Posterior cingulate gyrus (tissue), 11 donors: ENCODE measurements at regions of chr18 and their contacts with region 1.

Region 1: DNA sequence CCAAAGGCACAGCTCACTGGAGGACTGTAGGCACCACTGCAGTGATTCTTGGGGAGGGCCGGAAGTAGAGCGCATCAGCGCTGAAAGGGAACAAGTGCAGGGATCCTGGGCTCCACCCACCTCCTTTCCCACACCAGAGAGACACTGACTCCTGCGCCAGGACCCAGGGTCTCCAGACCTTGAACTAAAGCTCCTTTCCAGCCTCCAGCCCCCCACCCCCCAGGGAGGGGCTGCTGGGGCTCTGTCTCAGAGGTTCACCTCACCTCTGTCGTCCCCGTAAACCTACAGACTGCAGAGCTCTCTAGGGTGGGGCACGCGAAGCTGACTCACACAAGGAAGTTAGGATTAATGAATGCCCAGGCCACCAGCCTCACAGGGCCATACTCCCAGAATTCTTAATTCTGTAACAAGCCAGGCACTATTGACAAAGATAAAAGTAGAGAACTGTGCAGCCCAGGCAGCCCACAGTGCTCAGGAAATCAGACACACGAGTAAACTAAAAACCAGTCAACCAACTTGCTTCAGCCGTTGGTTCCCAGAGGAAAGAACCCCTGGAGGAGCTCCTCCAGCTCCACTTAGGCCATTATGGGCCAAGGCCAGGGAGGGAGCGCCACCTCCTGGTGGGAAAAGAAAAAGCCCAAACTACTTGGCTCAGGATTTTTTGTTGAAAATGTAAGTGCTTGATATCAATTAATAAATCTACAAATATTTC is 45.1 kb upstream of the ACAA2 start:
- DNase-seq: peak in 8 of 10 donors; percentile 56 to 94 (median 74)

Region 2: DNA sequence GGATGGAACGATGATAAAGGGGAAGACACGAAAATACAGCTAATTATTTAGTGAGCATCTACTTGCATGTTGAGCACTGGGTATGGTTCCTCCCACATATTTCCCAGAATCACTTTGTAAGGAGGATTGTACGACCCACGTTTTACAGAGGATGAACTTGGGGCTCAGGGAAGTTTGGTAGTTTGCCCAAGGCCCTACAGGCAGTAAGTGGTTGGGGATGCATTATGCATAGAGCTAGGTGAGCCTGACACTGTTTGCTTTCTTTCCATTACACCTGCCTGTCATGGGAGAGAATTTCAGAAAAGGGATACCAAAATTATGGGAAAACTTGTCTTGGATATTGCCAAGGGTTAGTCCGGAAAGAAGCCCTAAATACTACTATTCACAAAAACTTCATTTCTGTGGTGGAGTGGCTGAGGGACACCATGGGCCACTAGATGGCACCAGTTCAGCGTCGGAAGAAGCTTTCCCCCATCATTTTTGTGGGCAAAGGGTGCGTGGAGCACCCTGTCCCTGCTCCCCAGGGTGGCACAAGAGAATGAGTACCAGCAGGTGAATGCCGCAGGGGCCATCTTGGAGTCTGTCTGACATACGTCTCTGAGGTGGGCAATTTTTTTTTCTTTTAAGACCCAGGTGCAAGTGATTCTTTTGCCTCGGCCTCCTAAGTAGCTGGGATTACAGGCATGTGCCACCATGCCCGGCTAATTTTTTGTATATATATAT is 347.9 kb before region 1 on chr18:
- intact Hi-C with region 1: loop called (anchors 2 kb)
- DNase-seq: peak in 7 of 10 donors; percentile 32 to 89 (median 49)

Region 3: GRCh38 chr18:49561289-49562193 is 296.9 kb before region 1 on chr18 and contains the start of gene LIPG:
- intact Hi-C with region 1: loop called (anchors 1 kb)
- DNase-seq: peak in 6 of 10 donors; percentile 10 to 83 (median 53)

Region 4: DNA sequence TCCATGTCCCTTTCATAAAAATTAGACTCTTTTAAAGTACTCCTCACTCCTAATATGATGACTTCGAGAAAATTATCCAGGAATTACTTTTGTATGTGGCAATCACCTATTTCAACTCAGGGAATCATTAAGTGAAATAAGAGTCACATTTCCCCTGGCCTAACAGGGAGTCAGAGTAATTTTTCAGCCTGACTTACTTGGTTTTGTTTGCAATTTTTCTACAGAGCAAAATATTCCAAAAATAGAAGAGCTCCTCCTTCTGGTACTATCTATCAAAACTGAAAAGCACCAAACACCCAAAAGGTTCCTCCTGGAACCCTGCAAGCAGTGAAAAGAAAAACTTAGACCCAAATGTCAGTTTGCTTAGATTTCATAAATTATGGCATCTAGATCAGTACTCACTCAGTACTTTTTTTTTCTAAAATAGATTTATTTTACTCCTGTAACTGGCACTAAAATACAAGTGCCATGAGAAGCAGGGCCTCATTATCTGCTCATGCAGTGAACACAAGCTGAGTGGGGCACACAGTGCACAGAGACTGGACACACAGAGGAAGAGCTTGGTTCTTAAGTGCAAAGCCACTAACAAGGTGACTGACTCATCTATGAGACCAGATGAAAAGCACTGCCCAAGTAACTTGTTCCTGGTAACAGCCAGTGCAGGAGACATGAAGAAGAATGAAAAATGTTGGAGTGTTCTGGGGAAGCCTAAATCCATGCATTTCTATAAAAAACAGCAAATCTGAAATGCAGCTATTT is 73.9 kb before region 1 on chr18:
- intact Hi-C with region 1: loop called (anchors 10 kb)
- DNase-seq: no peak

Region 5: DNA sequence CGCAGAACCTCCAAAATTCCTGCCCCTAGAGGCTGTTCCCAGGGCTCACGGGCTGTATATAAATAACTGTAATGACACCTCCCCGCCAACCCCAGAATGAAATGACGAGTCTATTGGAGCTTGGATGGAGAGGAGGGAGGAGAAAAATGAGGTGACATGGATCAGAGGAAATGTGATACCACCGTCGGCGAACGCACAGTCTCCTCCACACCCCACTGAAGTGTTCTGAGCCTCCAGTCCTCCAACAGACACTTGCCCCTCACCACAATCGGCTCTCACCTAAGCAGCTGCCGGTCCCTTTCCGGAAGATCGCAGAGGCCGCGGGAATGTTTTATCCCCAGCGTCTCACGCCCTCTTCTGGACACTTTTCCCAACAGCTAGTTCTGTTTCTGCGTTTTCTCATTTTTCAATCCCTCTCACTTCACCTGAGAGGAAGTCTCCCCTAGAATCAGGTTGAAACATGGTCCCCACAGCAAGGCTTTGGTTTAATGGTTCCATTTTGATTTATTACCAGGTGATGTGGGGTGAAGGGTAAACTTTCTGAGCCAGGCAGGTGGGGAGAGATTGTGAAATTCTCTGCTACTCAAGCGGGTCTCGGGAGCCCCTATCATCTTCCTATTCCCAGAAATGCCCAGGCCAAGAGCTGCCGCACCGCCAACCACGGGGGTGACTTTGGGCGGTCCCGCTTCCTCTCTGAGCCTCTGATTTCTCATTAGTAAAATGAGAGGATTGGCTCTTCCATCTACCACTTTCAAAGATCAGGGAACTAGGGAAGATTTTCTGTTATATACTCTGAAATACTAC is 345.5 kb after region 1 on chr18:
- intact Hi-C with region 1: loop called (anchors 10 kb)
- DNase-seq: peak in 7 of 10 donors; percentile 46 to 91 (median 51)